ENCODE measurements at regions of chr11 and their contacts with region 1.

Region 1: GRCh38 chr11:93267383-93267782 is 63.2 kb upstream of the DEUP1 start:
- DNase-seq: no peak
- ATAC-seq: no peak
- H3K4me3 ChIP-seq: no peak overlapping the region
- H3K27ac ChIP-seq: no peak overlapping the region
- H3K4me1 ChIP-seq: no peaks in the 10 kb centered on the region
- H3K27me3 ChIP-seq: no peaks in the 10 kb centered on the region
- CTCF ChIP-seq: no peak

Region 2: DNA sequence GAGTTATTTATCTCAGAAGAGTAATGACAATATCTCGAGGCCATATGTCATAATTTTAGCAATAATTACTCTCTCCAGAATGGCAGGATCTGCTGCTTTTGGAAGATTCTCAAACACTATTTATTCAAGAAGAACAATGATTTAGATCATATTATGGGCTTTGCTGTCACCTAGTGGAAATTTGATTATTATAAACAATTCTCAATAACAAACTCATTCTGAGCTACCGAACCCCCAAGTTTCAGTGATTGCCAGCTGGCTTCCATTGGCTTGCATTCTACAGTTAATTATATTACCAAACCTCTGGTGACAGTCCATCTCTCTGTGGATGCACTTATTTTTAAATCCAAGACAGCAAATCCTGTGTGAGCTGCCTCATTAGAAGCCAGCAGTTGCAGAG is 41.7 kb before region 1 on chr11:
- intact Hi-C with region 1: no loop called
- DNase-seq: no peak
- ATAC-seq: no peak
- H3K4me3 ChIP-seq: no peak overlapping the region
- H3K27ac ChIP-seq: no peak overlapping the region
- H3K4me1 ChIP-seq: no peaks in the 10 kb centered on the region
- H3K27me3 ChIP-seq: peaks cover 0 to 6% (median 0%) of the 10 kb centered on the region in 7 donors
- CTCF ChIP-seq: peak in 8 of 9 donors; percentile 9 to 61 (median 48)

Region 3: DNA sequence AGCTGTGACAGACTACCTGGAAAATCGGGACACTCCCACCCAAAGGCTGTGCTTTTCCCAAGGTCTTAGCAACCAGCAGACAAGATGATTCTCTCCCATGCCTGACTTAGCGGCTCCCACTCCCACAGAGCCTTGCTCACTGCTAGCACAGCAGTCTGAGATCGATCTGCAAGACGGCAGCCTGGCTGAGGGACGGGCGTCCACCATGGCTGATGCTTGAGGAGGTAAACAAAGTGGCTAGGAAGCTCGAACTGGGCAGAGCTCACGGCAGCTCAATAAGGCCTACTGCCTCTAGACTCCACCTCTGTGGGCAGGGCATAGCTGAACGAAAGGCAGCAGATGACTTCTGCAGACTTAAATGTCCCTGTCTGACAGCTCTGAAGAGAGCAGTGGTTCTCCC is 190.9 kb after region 1 on chr11:
- intact Hi-C with region 1: loop called in 1 of 10 experiments (anchors 10 kb)
- DNase-seq: no peak
- ATAC-seq: no peak
- H3K4me3 ChIP-seq: no peak overlapping the region
- H3K27ac ChIP-seq: no peak overlapping the region
- H3K4me1 ChIP-seq: no peaks in the 10 kb centered on the region
- H3K27me3 ChIP-seq: no peaks in the 10 kb centered on the region
- CTCF ChIP-seq: no peak